Posterior cingulate gyrus (tissue), 11 donors: ENCODE measurements at regions of chr12 and their contacts with region 1.

Region 1: DNA sequence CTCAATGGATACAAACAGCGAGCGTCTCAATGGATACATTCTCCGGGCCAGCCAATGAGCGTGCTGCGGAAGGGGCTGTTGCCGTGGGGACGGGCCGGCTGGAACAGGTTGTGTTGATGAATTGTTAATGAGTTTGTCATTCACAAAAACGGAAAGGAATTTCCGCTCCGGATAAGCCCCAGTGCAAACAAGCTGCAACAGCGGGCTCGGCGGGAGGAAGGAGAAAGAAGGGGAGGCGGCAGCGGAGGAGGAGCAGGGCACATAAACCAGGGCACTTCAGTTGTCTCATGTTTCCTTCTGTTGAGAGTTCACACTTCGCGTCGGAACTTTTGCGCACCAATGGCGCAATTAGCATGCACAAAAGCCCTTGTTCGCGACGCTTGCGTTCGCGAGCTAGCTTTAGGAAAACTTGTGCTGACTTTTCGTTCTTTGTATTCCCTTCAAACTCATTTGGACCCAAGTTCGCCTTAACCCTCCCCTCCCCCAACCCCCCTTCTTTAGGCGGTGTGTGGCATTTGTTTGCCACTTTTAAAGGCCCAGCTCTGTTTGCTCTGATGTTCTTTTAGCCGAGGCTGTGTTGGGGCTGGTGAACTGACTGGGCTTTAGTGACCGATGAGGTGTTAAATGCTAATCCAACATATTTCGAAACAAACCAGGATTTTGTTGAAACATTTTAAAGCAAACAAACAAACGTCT is at the start of gene DUSP6:
- DNase-seq: peak; percentile 83 to 99 (median 92)

Region 2: GRCh38 chr12:89051065-89051677 is 301.5 kb before region 1 on chr12:
- intact Hi-C with region 1: loop called (anchors 10 kb)
- DNase-seq: no peak